ENCODE measurements at regions of chr19 and their contacts with region 1.

Region 1: DNA sequence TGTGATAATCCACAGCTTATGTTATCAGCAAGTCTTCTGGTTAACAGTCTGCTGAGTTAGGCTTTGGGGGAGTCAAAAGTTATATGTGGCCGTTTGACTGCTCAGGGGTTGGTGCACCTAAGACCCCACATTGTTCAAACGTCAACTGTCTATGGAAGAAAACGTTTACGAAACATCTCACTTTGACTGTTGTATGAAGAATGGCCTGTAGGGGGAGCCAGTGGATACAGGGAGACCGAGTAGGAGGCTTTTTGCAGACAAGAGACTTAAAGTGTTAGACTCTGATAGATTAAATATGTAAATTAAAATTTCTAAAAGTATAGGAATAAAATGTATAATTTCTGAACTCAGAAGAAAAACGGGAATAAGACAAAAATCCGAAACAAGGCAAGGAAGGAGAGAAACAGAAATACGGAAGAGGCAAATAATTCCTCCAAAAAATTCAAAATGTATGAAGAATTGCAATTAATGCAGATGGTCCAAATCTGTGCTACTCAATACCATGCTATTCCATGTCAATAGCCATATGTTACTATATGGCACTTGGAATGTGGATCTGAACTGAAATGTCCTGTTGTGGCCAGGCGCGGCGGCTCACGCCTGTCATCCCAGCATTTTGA is 37.8 kb downstream of the TNFSF14 start:
- DNase-seq: no peak
- H3K4me3 ChIP-seq: no peak overlapping the region
- H3K27ac ChIP-seq: no peak overlapping the region
- H3K4me1 ChIP-seq: no peaks in the 10 kb centered on the region
- H3K27me3 ChIP-seq: peaks cover 19% of the 10 kb centered on the region
- CTCF ChIP-seq: peak; percentile 90

Region 2: DNA sequence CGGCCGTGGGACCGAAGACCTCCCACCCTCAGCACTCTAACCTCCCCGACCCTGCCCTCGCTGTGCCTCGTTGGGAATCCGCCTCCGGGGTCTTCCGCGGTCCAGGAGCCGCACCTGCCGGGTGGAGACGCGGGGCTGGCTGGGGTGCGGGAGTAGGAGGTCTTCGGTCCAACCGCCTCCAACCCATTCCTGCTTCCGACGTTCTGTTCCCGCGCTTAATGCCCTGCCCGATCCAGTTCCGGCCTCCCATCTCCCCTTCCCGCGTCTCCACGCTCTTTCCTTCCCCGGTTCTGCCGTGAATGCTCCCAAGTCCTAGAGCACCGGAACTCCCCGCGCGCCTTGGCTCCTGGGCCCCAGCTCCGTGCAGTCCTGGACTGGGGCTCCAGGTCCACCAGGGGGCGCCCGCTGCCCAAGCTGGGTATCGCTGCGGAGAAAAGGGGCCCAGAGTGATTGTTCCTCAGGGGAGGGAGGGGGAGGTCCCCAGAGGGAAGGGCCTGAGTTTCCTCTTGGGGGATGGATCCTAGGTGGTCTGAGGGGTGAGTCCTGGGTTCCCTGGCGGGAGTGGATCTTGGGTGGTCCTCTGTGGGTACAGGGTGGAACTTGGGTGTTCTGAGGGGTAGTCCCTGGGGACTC is 115.3 kb before region 1 on chr19:
- intact Hi-C with region 1: loop called (anchors 10 kb)
- DNase-seq: peak; percentile 89
- H3K4me3 ChIP-seq: peak overlapping the region; percentile 82
- H3K27ac ChIP-seq: peak overlapping the region; percentile 88
- H3K4me1 ChIP-seq: peaks cover 26% of the 10 kb centered on the region
- H3K27me3 ChIP-seq: peaks cover 2% of the 10 kb centered on the region
- CTCF ChIP-seq: peak; percentile 98

Region 3: GRCh38 chr19:6551607-6552450 is 80.3 kb before region 1 on chr19:
- intact Hi-C with region 1: no loop called
- DNase-seq: no peak
- H3K4me3 ChIP-seq: no peak overlapping the region
- H3K27ac ChIP-seq: no peak overlapping the region
- H3K4me1 ChIP-seq: peaks cover 7% of the 10 kb centered on the region
- H3K27me3 ChIP-seq: peaks cover 40% of the 10 kb centered on the region
- CTCF ChIP-seq: peak; percentile 19

Region 4: GRCh38 chr19:6654347-6655310 is 22.5 kb after region 1 on chr19:
- intact Hi-C with region 1: no loop called
- DNase-seq: no peak
- H3K4me3 ChIP-seq: no peak overlapping the region
- H3K27ac ChIP-seq: no peak overlapping the region
- H3K4me1 ChIP-seq: no peaks in the 10 kb centered on the region
- H3K27me3 ChIP-seq: peaks cover 76% of the 10 kb centered on the region
- CTCF ChIP-seq: no peak

Region 5: DNA sequence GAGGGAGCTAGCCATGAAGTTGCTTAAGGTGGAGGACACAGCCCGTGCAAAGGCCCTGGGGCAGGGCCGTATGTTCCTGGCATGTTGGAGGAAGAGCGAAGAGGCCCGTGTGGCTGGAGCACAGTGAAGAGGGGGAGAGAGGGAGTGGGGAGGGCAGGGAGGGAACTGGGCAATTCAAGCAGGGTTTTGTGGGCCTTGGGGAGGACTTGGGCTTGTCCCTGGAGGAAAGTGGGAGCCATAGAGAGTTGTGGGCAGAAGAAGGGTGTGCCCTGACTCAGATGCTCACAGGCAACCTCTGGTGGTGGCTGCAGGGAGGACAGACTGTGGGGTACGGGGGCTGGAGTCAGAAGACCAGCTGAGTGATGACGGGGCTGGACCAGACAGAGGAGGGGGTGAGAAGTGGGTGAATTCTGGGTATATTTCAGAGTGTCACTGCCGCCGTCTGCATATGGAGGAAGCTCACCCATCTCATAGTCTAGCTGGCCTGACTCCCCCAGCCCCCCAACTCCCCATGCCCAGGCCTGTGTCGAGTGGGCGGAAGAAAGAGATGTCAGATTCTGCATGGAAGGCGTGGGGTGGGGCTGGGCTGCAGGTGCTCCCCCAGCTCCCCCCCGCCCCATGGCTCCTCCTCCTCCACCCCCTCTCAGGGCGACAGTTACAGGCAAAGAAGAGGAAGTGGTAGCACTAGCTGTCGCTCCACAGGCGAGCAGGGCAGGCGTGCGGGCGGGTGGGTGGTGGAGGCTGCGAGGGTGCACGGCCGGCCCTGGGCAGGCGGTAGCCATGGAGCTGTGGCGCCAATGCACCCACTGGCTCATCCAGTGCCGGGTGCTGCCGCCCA is 140.1 kb after region 1 on chr19 and contains the start of gene VAV1:
- intact Hi-C with region 1: loop called (anchors 10 kb)
- DNase-seq: peak; percentile 58
- H3K4me3 ChIP-seq: peak within 1 kb of the TSS; percentile 52
- H3K27ac ChIP-seq: peak within 1 kb of the TSS; percentile 54
- H3K4me1 ChIP-seq: peaks cover 8% of the 10 kb centered on the region
- H3K27me3 ChIP-seq: peaks cover 38% of the 10 kb centered on the region
- CTCF ChIP-seq: no peak
- total RNA-seq, gene VAV1: 1.8 TPM

Region 6: GRCh38 chr19:6862673-6863078 is 230.6 kb after region 1 on chr19:
- intact Hi-C with region 1: loop called (anchors 10 kb)
- DNase-seq: peak; percentile 81
- H3K4me3 ChIP-seq: peak overlapping the region; percentile 58
- H3K27ac ChIP-seq: no peak overlapping the region
- H3K4me1 ChIP-seq: peaks cover 8% of the 10 kb centered on the region
- H3K27me3 ChIP-seq: peaks cover 24% of the 10 kb centered on the region
- CTCF ChIP-seq: peak; percentile 87